GM12878 (cell line): ENCODE measurements at regions of chr5 and their contacts with region 1.

Region 1: GRCh38 chr5:97142521-97143254 is at the start of gene LIX1:
- DNase-seq: no peak
- ATAC-seq: peak; percentile 97
- H3K4me3 ChIP-seq: no peak within 1 kb of the TSS
- H3K27ac ChIP-seq: no peak within 1 kb of the TSS
- H3K4me1 ChIP-seq: no peaks in the 10 kb centered on the region
- H3K27me3 ChIP-seq: no peaks in the 10 kb centered on the region
- CTCF ChIP-seq: peak; percentile 60 to 84 (median 70); a peak in 5 of 6 replicates
- EP300 ChIP-seq: no peak
- POLR2A ChIP-seq: no peak
- RAD21 ChIP-seq: peak; percentile 91
- polyA plus RNA-seq, gene LIX1: 0.02 TPM

Region 2: GRCh38 chr5:96517295-96517694 is 625.4 kb before region 1 on chr5:
- CTCF ChIA-PET with region 1: no interaction called
- POLR2A ChIA-PET with region 1: no interaction called
- RAD21 ChIA-PET with region 1: no interaction called
- SMC1A ChIA-PET with region 1: no interaction called
- in situ Hi-C with region 1: no loop called
- intact Hi-C with region 1: no loop called
- DNase-seq: no peak
- ATAC-seq: no peak
- H3K4me3 ChIP-seq: no peak overlapping the region
- H3K27ac ChIP-seq: no peak overlapping the region
- H3K4me1 ChIP-seq: no peaks in the 10 kb centered on the region
- H3K27me3 ChIP-seq: no peaks in the 10 kb centered on the region; a peak in 1 of 4 replicates
- CTCF ChIP-seq: no peak
- EP300 ChIP-seq: no peak
- POLR2A ChIP-seq: no peak
- RAD21 ChIP-seq: no peak

Region 3: DNA sequence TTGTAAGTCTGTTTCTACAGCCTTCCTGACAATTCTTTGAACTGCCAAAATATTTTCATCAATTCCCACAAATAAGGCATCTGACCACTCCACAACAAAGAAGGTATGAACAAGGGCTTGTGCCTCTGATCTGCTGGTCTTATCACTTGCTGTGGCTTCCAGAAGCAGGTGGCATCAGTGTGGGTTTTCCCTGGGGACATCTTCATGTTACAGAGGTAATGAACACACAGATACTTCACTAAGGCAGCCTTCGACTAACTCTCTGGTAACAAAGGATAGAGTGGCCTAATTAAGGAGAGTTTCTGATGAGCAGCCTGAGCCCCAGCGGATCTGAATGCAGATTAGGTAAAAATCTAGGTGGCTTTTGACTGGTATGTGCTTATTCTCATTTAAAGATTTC is 281.6 kb before region 1 on chr5:
- CTCF ChIA-PET with region 1: interaction called, 165 read pairs
- POLR2A ChIA-PET with region 1: no interaction called
- RAD21 ChIA-PET with region 1: interaction called, 86 read pairs
- SMC1A ChIA-PET with region 1: interaction called, 106 read pairs
- in situ Hi-C with region 1: no loop called
- intact Hi-C with region 1: no loop called
- DNase-seq: no peak
- ATAC-seq: peak; percentile 84
- H3K4me3 ChIP-seq: no peak overlapping the region
- H3K27ac ChIP-seq: no peak overlapping the region
- H3K4me1 ChIP-seq: no peaks in the 10 kb centered on the region
- H3K27me3 ChIP-seq: no peaks in the 10 kb centered on the region
- CTCF ChIP-seq: no peak
- EP300 ChIP-seq: no peak; a peak in 1 of 4 replicates
- POLR2A ChIP-seq: no peak
- RAD21 ChIP-seq: no peak

Region 4: DNA sequence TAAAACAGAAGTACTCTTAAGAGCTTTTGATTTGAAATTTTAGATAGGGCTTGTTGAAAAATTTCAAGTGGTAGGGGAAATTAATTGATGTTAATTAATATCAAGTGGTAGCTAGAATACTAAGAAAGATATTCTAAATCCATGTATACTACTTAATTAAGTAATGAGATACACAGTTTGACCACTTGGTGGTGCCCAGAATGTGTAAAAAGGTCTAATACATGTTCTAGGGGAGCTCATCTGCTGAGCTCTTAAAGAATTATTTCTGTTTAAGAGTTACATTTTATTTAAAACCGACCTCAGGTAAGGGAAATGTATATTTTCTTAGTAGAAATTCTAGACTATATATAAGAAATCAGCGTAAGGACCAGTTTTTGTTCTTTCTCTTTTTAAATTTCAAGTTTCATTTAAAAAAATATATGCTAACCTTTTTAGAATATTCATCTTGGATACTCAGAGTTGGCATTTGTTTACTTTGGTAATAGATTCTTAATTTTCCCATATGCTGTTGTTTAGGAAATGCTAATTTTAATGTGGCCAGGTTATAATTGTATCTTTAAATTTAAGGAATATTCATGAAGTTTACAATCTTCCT is 145.3 kb before region 1 on chr5:
- CTCF ChIA-PET with region 1: interaction called, 64 read pairs
- POLR2A ChIA-PET with region 1: interaction called, 3 read pairs
- RAD21 ChIA-PET with region 1: interaction called, 45 read pairs
- SMC1A ChIA-PET with region 1: interaction called, 44 read pairs
- in situ Hi-C with region 1: no loop called
- intact Hi-C with region 1: loop called (anchors 1 kb)
- DNase-seq: no peak
- ATAC-seq: peak; percentile 92
- H3K4me3 ChIP-seq: no peak overlapping the region
- H3K27ac ChIP-seq: no peak overlapping the region
- H3K4me1 ChIP-seq: no peaks in the 10 kb centered on the region
- H3K27me3 ChIP-seq: no peaks in the 10 kb centered on the region
- CTCF ChIP-seq: peak; percentile 24 to 40 (median 40); a peak in 4 of 6 replicates
- EP300 ChIP-seq: no peak
- POLR2A ChIP-seq: no peak
- RAD21 ChIP-seq: peak; percentile 47

Region 5: GRCh38 chr5:97044052-97044451 is 98.6 kb before region 1 on chr5:
- CTCF ChIA-PET with region 1: interaction called, 10 read pairs
- POLR2A ChIA-PET with region 1: no interaction called
- RAD21 ChIA-PET with region 1: interaction called, 15 read pairs
- SMC1A ChIA-PET with region 1: interaction called, 8 read pairs
- in situ Hi-C with region 1: loop called (anchors 5 kb)
- intact Hi-C with region 1: loop called (anchors 5 kb)
- DNase-seq: no peak
- ATAC-seq: peak; percentile 33
- H3K4me3 ChIP-seq: no peak overlapping the region
- H3K27ac ChIP-seq: no peak overlapping the region
- H3K4me1 ChIP-seq: no peaks in the 10 kb centered on the region
- H3K27me3 ChIP-seq: no peaks in the 10 kb centered on the region; a peak in 1 of 4 replicates
- CTCF ChIP-seq: peak in 2 of 3 experiments; percentile 18; a peak in 2 of 6 replicates
- EP300 ChIP-seq: no peak
- POLR2A ChIP-seq: no peak
- RAD21 ChIP-seq: peak; percentile 45

Region 6: DNA sequence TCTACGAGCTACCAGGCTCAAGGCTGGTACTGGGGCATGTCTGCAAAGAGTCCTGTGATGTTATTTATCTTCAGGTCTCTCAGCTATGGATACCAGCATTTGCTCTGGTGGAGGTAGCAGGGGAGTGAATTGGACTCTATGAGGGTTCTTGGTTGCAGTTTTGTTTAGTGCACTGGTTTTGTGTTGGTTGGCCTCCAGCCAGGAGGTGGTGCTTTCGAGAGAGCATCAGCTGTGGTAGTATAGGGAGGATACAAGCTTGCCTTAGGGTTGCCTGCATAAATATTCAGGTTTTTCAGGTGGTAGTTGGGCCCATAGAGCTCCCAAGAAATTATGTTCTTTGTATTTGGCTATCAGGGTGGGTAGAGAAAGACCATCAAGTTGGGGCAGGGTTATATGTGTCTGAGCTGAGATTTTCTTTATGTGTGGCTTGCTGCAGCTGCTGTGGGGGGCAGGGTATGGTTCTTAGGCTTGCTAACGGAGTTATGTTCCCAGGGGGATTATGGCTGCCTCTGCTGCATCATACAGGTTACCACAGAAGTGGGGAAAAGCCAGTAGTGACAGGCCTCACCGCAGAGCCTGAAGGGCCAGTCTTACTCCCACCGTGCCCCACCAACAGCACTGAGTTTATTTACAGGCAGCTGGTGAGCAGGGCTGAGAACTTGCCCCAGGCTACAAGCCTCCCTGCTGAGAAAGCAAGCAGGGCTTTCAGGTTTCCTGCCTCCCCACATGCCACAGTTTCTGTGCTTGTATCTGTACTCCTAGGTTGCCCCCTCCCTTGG is 50.1 kb after region 1 on chr5:
- CTCF ChIA-PET with region 1: no interaction called
- POLR2A ChIA-PET with region 1: no interaction called
- RAD21 ChIA-PET with region 1: no interaction called
- SMC1A ChIA-PET with region 1: no interaction called
- in situ Hi-C with region 1: no loop called
- intact Hi-C with region 1: no loop called
- DNase-seq: peak; percentile 63
- ATAC-seq: peak; percentile 94
- H3K4me3 ChIP-seq: 0 out of 2 replicates have a peak overlapping the region, but pooled peaks have one; percentile 32
- H3K27ac ChIP-seq: peak overlapping the region; percentile 73
- H3K4me1 ChIP-seq: peaks cover 8% of the 10 kb centered on the region
- H3K27me3 ChIP-seq: no peaks in the 10 kb centered on the region
- CTCF ChIP-seq: no peak
- EP300 ChIP-seq: peak; percentile 28 to 49; a peak in 1 of 4 replicates
- POLR2A ChIP-seq: no peak
- RAD21 ChIP-seq: no peak